IMR-90 (cell line): ENCODE measurements at regions of chr18 and their contacts with region 1.

Region 1: GRCh38 chr18:61475931-61476330 is 142.7 kb downstream of the CDH20 start:
- DNase-seq: no peak
- ATAC-seq: no peak
- H3K4me3 ChIP-seq: no peak overlapping the region
- H3K27ac ChIP-seq: no peak overlapping the region
- H3K4me1 ChIP-seq: no peaks in the 10 kb centered on the region
- H3K27me3 ChIP-seq: no peaks in the 10 kb centered on the region; the same call in none of the 2 replicates
- CTCF ChIP-seq: no peak
- POLR2A ChIP-seq: no peak
- RAD21 ChIP-seq: no peak

Region 2: GRCh38 chr18:60684843-60685513 is 791.0 kb before region 1 on chr18:
- CTCF ChIA-PET with region 1: no interaction called
- POLR2A ChIA-PET with region 1: no interaction called
- dilution Hi-C with region 1: no loop called
- in situ Hi-C with region 1: loop called (anchors 25 kb)
- intact Hi-C with region 1: no loop called
- DNase-seq: peak; percentile 17
- ATAC-seq: no peak
- H3K4me3 ChIP-seq: no peak overlapping the region
- H3K27ac ChIP-seq: no peak overlapping the region
- H3K4me1 ChIP-seq: no peaks in the 10 kb centered on the region
- H3K27me3 ChIP-seq: no peaks in the 10 kb centered on the region
- CTCF ChIP-seq: peak; percentile 46
- POLR2A ChIP-seq: no peak
- RAD21 ChIP-seq: peak; percentile 43

Region 3: DNA sequence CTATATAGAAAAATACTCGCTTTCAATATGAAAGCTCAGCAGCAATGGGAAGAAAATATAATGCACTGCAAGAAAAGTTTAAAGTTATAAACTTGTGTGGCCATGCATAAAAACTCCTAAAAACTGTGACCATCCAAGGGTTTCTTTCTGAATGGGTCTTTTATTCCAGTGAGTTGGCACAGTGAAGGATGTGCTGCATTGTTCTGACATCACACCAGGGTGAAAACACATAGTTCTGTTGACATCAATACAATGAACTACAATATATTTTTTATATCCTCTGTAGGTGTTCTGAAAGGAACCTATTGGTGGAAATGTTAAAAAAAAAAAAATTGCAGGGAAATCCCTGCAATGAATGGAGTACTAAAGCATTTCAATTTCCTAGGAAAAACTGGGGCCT is 62.5 kb before region 1 on chr18:
- CTCF ChIA-PET with region 1: no interaction called
- POLR2A ChIA-PET with region 1: no interaction called
- dilution Hi-C with region 1: no loop called
- in situ Hi-C with region 1: no loop called
- intact Hi-C with region 1: loop called (anchors 2 kb)
- DNase-seq: no peak
- ATAC-seq: no peak
- H3K4me3 ChIP-seq: no peak overlapping the region
- H3K27ac ChIP-seq: no peak overlapping the region
- H3K4me1 ChIP-seq: no peaks in the 10 kb centered on the region
- H3K27me3 ChIP-seq: no peaks in the 10 kb centered on the region
- CTCF ChIP-seq: no peak
- POLR2A ChIP-seq: no peak
- RAD21 ChIP-seq: no peak